MCF 10A (cell line): ENCODE measurements at regions of chr7 and their contacts with region 1.

Region 1: DNA sequence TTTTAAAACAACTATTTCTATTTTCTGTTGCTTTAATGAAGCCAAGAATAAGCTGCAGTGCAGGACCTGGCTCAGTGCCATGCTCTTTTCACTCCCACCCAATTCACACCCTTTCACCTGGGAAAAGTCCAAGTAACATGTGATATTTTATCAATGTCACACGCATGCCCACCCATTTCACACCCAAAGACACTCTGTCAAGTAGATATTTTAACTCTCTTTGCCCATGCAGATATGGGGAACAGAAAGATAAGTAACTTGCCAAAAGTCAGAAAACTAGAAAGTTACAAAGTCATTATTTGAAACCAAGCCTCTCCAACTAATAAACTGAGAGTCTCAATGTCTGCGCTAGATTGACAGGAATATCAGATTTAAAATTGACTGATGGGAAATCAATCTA is 706.7 kb upstream of the PHF14 start:
- DNase-seq: no peak
- H3K4me3 Mint-ChIP-seq: no peak overlapping the region
- H3K27ac Mint-ChIP-seq: no peak overlapping the region
- H3K4me1 Mint-ChIP-seq: no peaks in the 10 kb centered on the region
- H3K27me3 Mint-ChIP-seq: peaks cover 73% of the 10 kb centered on the region
- CTCF ChIP-seq: no peak

Region 2: GRCh38 chr7:9945879-9946278 is 321.1 kb before region 1 on chr7:
- CTCF ChIA-PET with region 1: no interaction called
- POLR2A ChIA-PET with region 1: no interaction called
- intact Hi-C with region 1: no loop called
- DNase-seq: no peak
- H3K4me3 Mint-ChIP-seq: no peak overlapping the region
- H3K27ac Mint-ChIP-seq: no peak overlapping the region
- H3K4me1 Mint-ChIP-seq: no peaks in the 10 kb centered on the region
- H3K27me3 Mint-ChIP-seq: peaks cover 41% of the 10 kb centered on the region
- CTCF ChIP-seq: no peak

Region 3: GRCh38 chr7:10804770-10805169 is 537.8 kb after region 1 on chr7:
- CTCF ChIA-PET with region 1: no interaction called
- POLR2A ChIA-PET with region 1: no interaction called
- intact Hi-C with region 1: loop called (anchors 5 kb)
- DNase-seq: no peak
- H3K4me3 Mint-ChIP-seq: no peak overlapping the region
- H3K27ac Mint-ChIP-seq: no peak overlapping the region
- H3K4me1 Mint-ChIP-seq: peaks cover 13% of the 10 kb centered on the region
- H3K27me3 Mint-ChIP-seq: no peaks in the 10 kb centered on the region
- CTCF ChIP-seq: no peak